CD8-positive, alpha-beta T cell (primary cell): ENCODE measurements at regions of chr17 and their contacts with region 1.

Region 1: DNA sequence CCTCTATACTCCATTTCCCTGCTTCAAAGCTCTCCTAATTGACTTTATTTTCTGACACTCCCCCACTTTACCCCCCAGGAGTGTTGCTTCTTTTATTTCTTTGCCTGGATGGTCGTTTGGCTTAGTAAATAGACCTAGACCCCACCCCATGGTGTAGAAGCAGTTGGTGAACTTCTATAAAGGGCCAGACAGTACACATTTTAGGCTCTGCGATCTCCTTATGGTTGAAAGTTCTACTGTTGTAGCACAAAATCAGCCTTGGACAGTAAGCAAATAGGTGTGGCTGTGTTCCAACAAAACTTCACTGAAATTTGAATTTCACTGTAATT is 31.9 kb downstream of the ZNF287 start:
- DNase-seq: no peak
- ATAC-seq: no peak
- H3K4me3 ChIP-seq: no peak overlapping the region
- H3K4me3 Mint-ChIP-seq: peak overlapping the region; percentile 96
- H3K27ac ChIP-seq: peak overlapping the region in 1 of 2 experiments; percentile 45
- H3K27ac Mint-ChIP-seq: peak overlapping the region; percentile 96
- H3K4me1 ChIP-seq: peaks cover 9% of the 10 kb centered on the region
- H3K4me1 Mint-ChIP-seq: peaks cover 21% of the 10 kb centered on the region
- H3K27me3 ChIP-seq: no peaks in the 10 kb centered on the region
- H3K27me3 Mint-ChIP-seq: peaks cover 2% of the 10 kb centered on the region
- CTCF ChIP-seq: no peak

Region 2: DNA sequence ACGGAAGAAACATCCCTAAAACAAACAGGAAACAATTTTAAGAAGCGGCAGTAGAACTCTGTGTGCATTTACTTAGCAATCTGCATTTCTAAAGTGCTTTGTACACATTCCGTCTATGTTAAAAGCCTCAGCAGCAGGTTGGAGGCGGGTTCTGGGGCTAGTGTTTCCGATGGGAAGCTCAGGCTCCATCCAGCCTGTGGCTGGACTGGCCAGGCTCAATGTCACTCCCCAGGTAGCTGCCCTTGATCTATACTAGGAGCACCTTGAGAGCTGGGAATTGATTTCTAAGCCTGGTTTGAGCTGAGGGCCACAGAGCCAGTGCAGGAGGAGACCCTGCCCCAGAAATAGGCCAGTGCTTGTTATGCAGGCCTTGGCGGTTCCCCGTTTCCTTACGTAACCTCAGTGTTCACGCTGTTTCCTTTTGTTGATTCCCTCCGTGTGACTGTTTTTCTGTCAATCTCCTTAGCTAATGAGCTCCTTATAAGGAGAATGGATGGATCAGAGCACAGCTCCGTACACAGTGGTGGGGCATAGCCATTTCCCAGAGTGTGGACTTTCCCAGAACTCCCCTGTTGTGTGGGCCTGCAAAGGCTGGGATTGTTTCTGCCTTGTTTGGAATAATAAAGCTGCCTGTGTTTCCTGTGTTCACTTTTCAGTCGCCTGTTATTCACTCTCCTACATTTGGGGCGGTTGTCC is 570.8 kb before region 1 on chr17:
- CTCF ChIA-PET with region 1: no interaction called
- POLR2A ChIA-PET with region 1: no interaction called
- intact Hi-C with region 1: no loop called
- DNase-seq: peak in 1 of 9 experiments; percentile 21
- ATAC-seq: no peak
- H3K4me3 ChIP-seq: peak overlapping the region in 1 of 2 experiments; percentile 14
- H3K4me3 Mint-ChIP-seq: peak overlapping the region; percentile 57
- H3K27ac ChIP-seq: no peak overlapping the region
- H3K27ac Mint-ChIP-seq: peak overlapping the region; percentile 81
- H3K4me1 ChIP-seq: peaks cover 26% of the 10 kb centered on the region
- H3K4me1 Mint-ChIP-seq: peaks cover 20% of the 10 kb centered on the region
- H3K27me3 ChIP-seq: no peaks in the 10 kb centered on the region
- H3K27me3 Mint-ChIP-seq: no peaks in the 10 kb centered on the region
- CTCF ChIP-seq: no peak

Region 3: GRCh38 chr17:16215273-16215964 is 321.7 kb before region 1 on chr17 and contains the start of gene NCOR1:
- CTCF ChIA-PET with region 1: no interaction called
- POLR2A ChIA-PET with region 1: no interaction called
- intact Hi-C with region 1: loop called in 1 of 2 experiments (anchors 10 kb)
- DNase-seq: peak; percentile 75 to 94 (median 89)
- ATAC-seq: peak; percentile 87
- H3K4me3 ChIP-seq: peak within 1 kb of the TSS; percentile 70 to 83
- H3K4me3 Mint-ChIP-seq: peak within 1 kb of the TSS; percentile 93
- H3K27ac ChIP-seq: peak within 1 kb of the TSS; percentile 71 to 82
- H3K27ac Mint-ChIP-seq: peak within 1 kb of the TSS; percentile 95
- H3K4me1 ChIP-seq: peaks cover 44% of the 10 kb centered on the region
- H3K4me1 Mint-ChIP-seq: peaks cover 56% of the 10 kb centered on the region
- H3K27me3 ChIP-seq: no peaks in the 10 kb centered on the region
- H3K27me3 Mint-ChIP-seq: no peaks in the 10 kb centered on the region
- CTCF ChIP-seq: no peak
- total RNA-seq, gene NCOR1: 119 TPM

Region 4: GRCh38 chr17:16353317-16354174 is 183.5 kb before region 1 on chr17 and contains the start of gene CENPV:
- CTCF ChIA-PET with region 1: no interaction called
- POLR2A ChIA-PET with region 1: no interaction called
- intact Hi-C with region 1: loop called in 1 of 2 experiments (anchors 5 kb)
- DNase-seq: peak; percentile 28 to 86 (median 70)
- ATAC-seq: peak; percentile 85
- H3K4me3 ChIP-seq: peak within 1 kb of the TSS; percentile 63 to 79
- H3K4me3 Mint-ChIP-seq: peak within 1 kb of the TSS; percentile 92
- H3K27ac ChIP-seq: peak within 1 kb of the TSS; percentile 47 to 57
- H3K27ac Mint-ChIP-seq: peak within 1 kb of the TSS; percentile 85
- H3K4me1 ChIP-seq: peaks cover 16% of the 10 kb centered on the region
- H3K4me1 Mint-ChIP-seq: peaks cover 28% of the 10 kb centered on the region
- H3K27me3 ChIP-seq: no peaks in the 10 kb centered on the region
- H3K27me3 Mint-ChIP-seq: no peaks in the 10 kb centered on the region
- CTCF ChIP-seq: no peak
- total RNA-seq, gene CENPV: 28.8 to 31.8 TPM

Region 5: DNA sequence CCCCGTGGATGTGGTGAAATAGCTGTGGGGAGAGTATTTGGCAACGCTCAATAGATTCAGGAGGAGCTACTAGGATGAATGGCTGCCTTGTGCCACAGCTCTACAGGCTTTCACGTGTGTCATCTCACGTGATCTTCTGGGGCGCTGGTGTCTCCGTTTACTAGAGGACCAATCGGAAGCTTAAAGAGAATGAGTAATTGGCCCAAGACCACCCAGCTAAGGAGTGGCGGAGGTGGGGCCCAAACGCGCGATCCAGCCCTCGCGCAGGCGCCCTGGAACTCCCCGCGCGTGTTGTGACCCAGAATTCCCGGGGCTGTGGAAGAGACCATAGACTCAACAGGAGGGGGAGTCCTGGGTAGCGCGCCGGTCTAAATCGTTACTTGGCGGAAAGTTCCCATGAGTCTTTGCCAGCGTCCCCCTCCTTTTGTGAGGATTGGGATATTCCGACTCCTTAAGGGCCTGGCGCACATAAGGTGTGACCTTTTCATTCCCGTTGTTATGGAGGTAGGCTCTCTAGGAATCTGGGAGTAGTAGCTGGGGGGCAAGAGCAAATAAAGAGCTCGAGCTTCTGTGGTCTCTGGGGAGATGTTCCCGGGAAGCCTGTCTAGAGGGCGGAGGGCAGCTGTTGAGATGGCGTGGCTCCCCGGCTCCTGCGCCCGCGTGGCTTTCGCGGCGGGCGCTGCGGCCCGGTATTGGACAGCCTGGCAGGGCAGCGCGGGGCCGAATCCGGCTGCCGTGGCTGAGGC is 98.4 kb before region 1 on chr17:
- CTCF ChIA-PET with region 1: interaction called, 3 read pairs
- POLR2A ChIA-PET with region 1: interaction called, 10 read pairs
- intact Hi-C with region 1: loop called (anchors 1 kb)
- DNase-seq: peak; percentile 89 to 99 (median 93)
- ATAC-seq: peak; percentile 80
- H3K4me3 ChIP-seq: peak overlapping the region; percentile 88 to 91
- H3K4me3 Mint-ChIP-seq: peak overlapping the region; percentile 99
- H3K27ac ChIP-seq: peak overlapping the region; percentile 88 to 90
- H3K27ac Mint-ChIP-seq: peak overlapping the region; percentile 99
- H3K4me1 ChIP-seq: peaks cover 34% of the 10 kb centered on the region
- H3K4me1 Mint-ChIP-seq: peaks cover 46% of the 10 kb centered on the region
- H3K27me3 ChIP-seq: no peaks in the 10 kb centered on the region
- H3K27me3 Mint-ChIP-seq: no peaks in the 10 kb centered on the region
- CTCF ChIP-seq: no peak

Region 6: GRCh38 chr17:16568541-16569357 is 31.7 kb after region 1 on chr17 and contains the start of gene ZNF287:
- CTCF ChIA-PET with region 1: interaction called, 4 read pairs
- POLR2A ChIA-PET with region 1: interaction called, 8 read pairs
- intact Hi-C with region 1: loop called (anchors 1 kb)
- DNase-seq: peak; percentile 84 to 97 (median 94)
- ATAC-seq: peak; percentile 96
- H3K4me3 ChIP-seq: peak within 1 kb of the TSS; percentile 63 to 68
- H3K4me3 Mint-ChIP-seq: peak within 1 kb of the TSS; percentile 83
- H3K27ac ChIP-seq: peak within 1 kb of the TSS; percentile 59 to 61
- H3K27ac Mint-ChIP-seq: peak within 1 kb of the TSS; percentile 89
- H3K4me1 ChIP-seq: peaks cover 9% of the 10 kb centered on the region
- H3K4me1 Mint-ChIP-seq: peaks cover 28% of the 10 kb centered on the region
- H3K27me3 ChIP-seq: no peaks in the 10 kb centered on the region
- H3K27me3 Mint-ChIP-seq: peaks cover 8% of the 10 kb centered on the region
- CTCF ChIP-seq: no peak
- total RNA-seq, gene ZNF287: 13.7 to 13.8 TPM

Region 7: GRCh38 chr17:16653209-16654041 is 116.3 kb after region 1 on chr17 and contains the start of gene ZNF624:
- CTCF ChIA-PET with region 1: no interaction called
- POLR2A ChIA-PET with region 1: no interaction called
- intact Hi-C with region 1: loop called (anchors 1 kb)
- DNase-seq: peak; percentile 68 to 93 (median 85)
- ATAC-seq: peak; percentile 95
- H3K4me3 ChIP-seq: peak within 1 kb of the TSS; percentile 76 to 94
- H3K4me3 Mint-ChIP-seq: peak within 1 kb of the TSS; percentile 83
- H3K27ac ChIP-seq: peak within 1 kb of the TSS; percentile 22 to 62
- H3K27ac Mint-ChIP-seq: peak within 1 kb of the TSS; percentile 79
- H3K4me1 ChIP-seq: peaks cover 13% of the 10 kb centered on the region
- H3K4me1 Mint-ChIP-seq: peaks cover 24% of the 10 kb centered on the region
- H3K27me3 ChIP-seq: no peaks in the 10 kb centered on the region
- H3K27me3 Mint-ChIP-seq: peaks cover 11% of the 10 kb centered on the region
- CTCF ChIP-seq: no peak
- total RNA-seq, gene ZNF624: 3.2 to 3.4 TPM

Region 8: DNA sequence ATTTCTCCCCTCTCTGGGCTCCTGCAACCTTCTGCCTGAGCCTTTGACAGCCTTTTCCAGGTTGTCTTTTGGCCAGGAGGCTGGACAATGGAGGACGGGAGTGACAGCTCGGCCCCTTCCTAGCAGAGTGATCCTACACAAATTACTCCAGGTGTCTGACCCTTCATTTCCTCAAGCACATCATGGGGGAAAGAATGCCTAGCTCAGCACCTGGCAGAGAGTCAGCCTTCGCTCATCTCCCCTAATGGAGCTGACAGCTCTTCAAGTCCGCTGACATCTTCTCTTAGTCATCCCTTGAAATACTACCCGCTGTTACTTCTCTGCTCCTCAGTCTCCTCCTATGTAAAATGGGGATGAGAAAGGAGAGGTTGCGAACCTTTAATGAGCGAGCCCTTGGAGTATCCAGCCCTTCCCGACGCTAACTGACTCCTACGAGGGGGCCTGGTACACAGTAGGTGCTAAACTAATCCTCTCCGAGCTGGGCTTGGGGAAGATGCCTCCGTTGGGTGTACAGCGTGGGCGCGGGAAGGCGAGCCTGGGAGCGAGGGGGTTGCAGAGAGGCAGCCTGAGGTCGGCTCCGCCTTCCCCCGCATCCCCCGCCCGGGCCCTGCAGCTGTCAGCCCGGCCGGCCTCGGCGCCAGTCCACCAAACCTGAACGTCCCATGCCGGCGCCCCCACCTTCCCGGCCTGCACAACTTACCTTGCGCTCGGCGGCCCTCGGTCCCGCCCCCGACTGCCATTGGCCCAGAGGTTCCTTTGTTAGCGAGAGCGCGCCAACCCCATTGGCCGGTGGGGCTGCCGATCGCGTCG is 504.7 kb after region 1 on chr17:
- CTCF ChIA-PET with region 1: no interaction called
- POLR2A ChIA-PET with region 1: no interaction called
- intact Hi-C with region 1: loop called in 1 of 2 experiments (anchors 2 kb)
- DNase-seq: peak; percentile 93 to 99 (median 98)
- ATAC-seq: peak; percentile 97
- H3K4me3 ChIP-seq: peak overlapping the region; percentile 51 to 70
- H3K4me3 Mint-ChIP-seq: peak overlapping the region; percentile 70
- H3K27ac ChIP-seq: peak overlapping the region in 1 of 2 experiments; percentile 40
- H3K27ac Mint-ChIP-seq: peak overlapping the region; percentile 28
- H3K4me1 ChIP-seq: peaks cover 35% of the 10 kb centered on the region
- H3K4me1 Mint-ChIP-seq: peaks cover 44% of the 10 kb centered on the region
- H3K27me3 ChIP-seq: no peaks in the 10 kb centered on the region
- H3K27me3 Mint-ChIP-seq: no peaks in the 10 kb centered on the region
- CTCF ChIP-seq: no peak